CD8-positive, alpha-beta T cell (primary cell): ENCODE measurements at regions of chr1 and their contacts with region 1.

Region 1: DNA sequence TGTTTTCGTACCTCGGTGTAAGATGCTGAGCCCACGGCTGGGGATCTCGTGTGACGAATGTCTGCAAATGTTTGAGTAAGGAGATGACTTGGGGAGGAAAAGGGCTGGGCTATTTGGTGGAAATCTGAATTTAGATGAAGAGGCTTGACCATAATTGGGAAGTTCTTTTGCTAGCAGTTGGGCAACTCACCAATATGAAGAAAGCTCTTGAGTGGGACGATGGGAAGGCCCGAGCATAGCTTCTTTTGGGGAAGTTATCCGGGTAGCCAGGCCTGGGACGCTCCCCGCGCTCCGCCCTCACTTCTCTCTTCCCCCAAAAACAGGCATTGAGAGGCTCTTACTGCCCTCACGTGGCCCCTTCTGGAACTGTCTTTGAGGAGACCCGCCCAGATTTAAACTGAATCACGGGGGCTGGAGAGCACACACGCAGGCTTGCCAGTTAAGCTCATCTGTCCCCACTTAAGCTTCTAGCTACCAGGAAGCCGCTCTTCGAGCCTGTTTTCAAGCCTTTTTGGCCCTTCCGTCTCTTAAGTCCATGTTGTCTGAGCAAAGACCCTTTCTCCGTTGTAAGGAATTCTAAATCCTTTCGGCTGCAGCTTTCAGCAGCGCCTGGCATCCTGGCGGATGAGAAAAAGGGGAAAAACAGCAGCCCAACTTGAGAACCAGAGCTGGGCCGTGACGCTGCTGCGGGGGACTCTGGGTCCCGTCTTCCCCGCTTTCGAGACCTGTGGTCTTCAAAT is 93.1 kb downstream of the NID1 start:
- DNase-seq: peak; percentile 81 to 93 (median 89)
- ATAC-seq: peak; percentile 99
- H3K4me3 ChIP-seq: peak overlapping the region; percentile 20 to 46
- H3K4me3 Mint-ChIP-seq: peak overlapping the region; percentile 78
- H3K27ac ChIP-seq: peak overlapping the region; percentile 53 to 54
- H3K27ac Mint-ChIP-seq: peak overlapping the region; percentile 99
- H3K4me1 ChIP-seq: peaks cover 7% of the 10 kb centered on the region
- H3K4me1 Mint-ChIP-seq: peaks cover 16% of the 10 kb centered on the region
- H3K27me3 ChIP-seq: no peaks in the 10 kb centered on the region
- H3K27me3 Mint-ChIP-seq: no peaks in the 10 kb centered on the region
- CTCF ChIP-seq: peak; percentile 82

Region 2: GRCh38 chr1:235504496-235505222 is 467.1 kb before region 1 on chr1:
- CTCF ChIA-PET with region 1: interaction called, 5 read pairs
- POLR2A ChIA-PET with region 1: interaction called, 4 read pairs
- intact Hi-C with region 1: loop called in 1 of 2 experiments (anchors 2 kb)
- DNase-seq: peak; percentile 97 to 99 (median 98)
- ATAC-seq: peak; percentile 87
- H3K4me3 ChIP-seq: peak overlapping the region; percentile 81 to 85
- H3K4me3 Mint-ChIP-seq: peak overlapping the region; percentile 91
- H3K27ac ChIP-seq: peak overlapping the region; percentile 87 to 89
- H3K27ac Mint-ChIP-seq: peak overlapping the region; percentile 98
- H3K4me1 ChIP-seq: peaks cover 7% of the 10 kb centered on the region
- H3K4me1 Mint-ChIP-seq: peaks cover 26% of the 10 kb centered on the region
- H3K27me3 ChIP-seq: no peaks in the 10 kb centered on the region
- H3K27me3 Mint-ChIP-seq: no peaks in the 10 kb centered on the region
- CTCF ChIP-seq: peak; percentile 91

Region 3: DNA sequence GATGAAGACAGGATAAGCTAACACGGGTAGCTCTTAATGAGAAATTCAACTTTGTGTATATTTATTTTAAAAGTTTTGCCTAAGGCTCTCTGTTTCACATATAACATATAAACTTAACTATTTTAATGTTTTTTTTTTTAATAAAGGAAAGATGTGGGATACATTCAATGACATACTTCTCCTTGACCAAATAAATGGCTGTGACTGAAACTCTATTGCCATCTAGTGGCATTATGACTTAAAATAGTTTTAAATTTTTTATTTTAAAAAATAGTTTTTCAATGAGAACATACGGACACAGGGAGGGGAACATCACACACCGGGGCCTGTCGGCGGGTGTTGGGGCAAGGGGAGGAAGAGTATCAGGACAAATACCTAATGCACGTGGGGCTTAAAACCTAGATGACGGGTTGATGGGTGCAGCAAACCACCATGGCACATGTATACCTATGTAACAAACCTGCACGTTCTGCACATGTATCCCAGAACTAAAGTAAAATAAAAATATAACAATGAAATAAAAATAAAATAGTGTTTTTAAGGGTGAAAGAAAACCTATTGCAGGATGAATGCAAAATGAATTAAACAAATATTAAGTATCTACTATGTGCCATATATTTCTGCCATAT is 188.5 kb before region 1 on chr1:
- CTCF ChIA-PET with region 1: interaction called, 43 read pairs
- POLR2A ChIA-PET with region 1: interaction called, 8 read pairs
- intact Hi-C with region 1: loop called (anchors 2 to 5 kb)
- DNase-seq: peak in 2 of 9 experiments; percentile 20 to 39
- ATAC-seq: no peak
- H3K4me3 ChIP-seq: no peak overlapping the region
- H3K4me3 Mint-ChIP-seq: no peak overlapping the region
- H3K27ac ChIP-seq: no peak overlapping the region
- H3K27ac Mint-ChIP-seq: no peak overlapping the region
- H3K4me1 ChIP-seq: no peaks in the 10 kb centered on the region
- H3K4me1 Mint-ChIP-seq: no peaks in the 10 kb centered on the region
- H3K27me3 ChIP-seq: no peaks in the 10 kb centered on the region
- H3K27me3 Mint-ChIP-seq: no peaks in the 10 kb centered on the region
- CTCF ChIP-seq: peak; percentile 63

Region 4: GRCh38 chr1:235838021-235838420 is 133.7 kb before region 1 on chr1:
- CTCF ChIA-PET with region 1: interaction called, 19 read pairs
- POLR2A ChIA-PET with region 1: interaction called, 4 read pairs
- intact Hi-C with region 1: no loop called
- DNase-seq: peak in 2 of 9 experiments; percentile 37 to 61
- ATAC-seq: peak; percentile 58
- H3K4me3 ChIP-seq: no peak overlapping the region
- H3K4me3 Mint-ChIP-seq: no peak overlapping the region
- H3K27ac ChIP-seq: peak overlapping the region in 1 of 2 experiments; percentile 45
- H3K27ac Mint-ChIP-seq: no peak overlapping the region
- H3K4me1 ChIP-seq: no peaks in the 10 kb centered on the region
- H3K4me1 Mint-ChIP-seq: peaks cover 43% of the 10 kb centered on the region
- H3K27me3 ChIP-seq: no peaks in the 10 kb centered on the region
- H3K27me3 Mint-ChIP-seq: no peaks in the 10 kb centered on the region
- CTCF ChIP-seq: no peak

Region 5: DNA sequence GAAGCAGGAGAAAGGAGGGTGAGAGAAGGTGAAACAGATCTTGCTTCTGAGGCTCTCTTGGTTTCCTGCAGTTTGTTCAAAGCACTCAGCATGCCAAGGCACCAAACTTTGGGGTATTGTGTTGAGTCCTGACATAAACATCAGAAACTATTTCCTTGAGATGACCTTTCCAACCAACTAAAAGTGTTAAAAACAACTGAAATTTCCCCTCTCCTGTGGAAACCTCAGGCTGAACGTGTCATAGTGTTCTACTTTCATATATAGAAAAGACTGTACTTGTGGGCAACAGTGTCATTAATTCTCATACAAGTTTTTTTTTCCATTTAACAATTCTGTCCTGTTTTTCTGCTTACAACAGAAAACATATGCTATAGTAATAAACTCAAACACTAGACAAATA is 98.7 kb before region 1 on chr1:
- CTCF ChIA-PET with region 1: interaction called, 103 read pairs
- POLR2A ChIA-PET with region 1: interaction called, 4 read pairs
- intact Hi-C with region 1: no loop called
- DNase-seq: peak in 3 of 9 experiments; percentile 32 to 85 (median 65)
- ATAC-seq: peak; percentile 32
- H3K4me3 ChIP-seq: no peak overlapping the region
- H3K4me3 Mint-ChIP-seq: no peak overlapping the region
- H3K27ac ChIP-seq: peak overlapping the region in 1 of 2 experiments; percentile 76
- H3K27ac Mint-ChIP-seq: peak overlapping the region; percentile 85
- H3K4me1 ChIP-seq: peaks cover 25% of the 10 kb centered on the region
- H3K4me1 Mint-ChIP-seq: peaks cover 53% of the 10 kb centered on the region
- H3K27me3 ChIP-seq: no peaks in the 10 kb centered on the region
- H3K27me3 Mint-ChIP-seq: no peaks in the 10 kb centered on the region
- CTCF ChIP-seq: no peak

Region 6: DNA sequence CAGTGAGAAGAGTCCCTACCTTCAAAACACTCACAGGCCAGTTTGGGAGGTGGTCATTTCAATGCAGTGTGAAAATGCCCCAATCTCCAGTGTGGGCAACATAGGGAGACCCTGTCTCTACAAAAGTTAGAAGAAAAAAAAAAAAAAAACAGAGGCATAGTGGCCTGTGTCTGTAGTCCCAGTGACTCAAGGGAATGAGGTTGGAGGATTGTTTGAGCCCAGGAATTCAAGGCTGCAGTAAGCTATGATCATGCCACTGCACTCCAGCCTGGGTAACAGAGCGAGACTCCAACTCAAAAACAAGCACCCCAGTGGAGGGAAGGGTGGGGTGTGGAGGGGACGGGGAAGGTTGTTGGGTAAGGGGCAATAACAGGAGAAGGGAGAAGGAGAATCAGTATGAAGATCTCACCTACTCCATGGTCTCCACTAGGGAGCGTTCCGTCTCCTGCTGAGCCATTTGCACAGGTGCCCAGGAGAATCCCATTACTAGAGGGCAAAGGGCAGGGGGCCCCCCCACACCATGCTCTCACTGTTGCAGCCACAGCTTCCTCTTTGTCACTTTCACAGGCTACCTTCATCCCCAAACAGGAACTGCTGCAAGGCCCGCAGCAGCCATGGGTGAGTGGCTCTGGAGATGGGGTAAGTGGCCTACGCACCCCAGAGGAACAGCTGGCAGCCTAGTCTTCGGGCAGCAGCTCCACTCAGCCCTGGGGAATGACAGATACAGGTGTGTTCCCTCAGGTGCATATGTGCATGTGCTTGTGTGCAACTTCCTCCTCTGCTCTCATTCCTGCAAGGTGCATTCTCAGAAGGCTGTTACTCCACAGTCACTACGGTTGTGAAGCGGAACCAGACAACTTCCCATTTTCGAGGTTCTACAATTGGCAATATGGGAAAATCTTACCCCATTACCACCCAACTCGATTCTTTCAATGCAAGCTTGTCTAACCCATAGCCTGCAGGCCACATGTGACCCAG is 17.1 kb before region 1 on chr1:
- CTCF ChIA-PET with region 1: interaction called, 85 read pairs
- POLR2A ChIA-PET with region 1: interaction called, 11 read pairs
- intact Hi-C with region 1: loop called in 1 of 2 experiments (anchors 2 kb)
- DNase-seq: peak; percentile 5 to 79 (median 61)
- ATAC-seq: peak; percentile 85
- H3K4me3 ChIP-seq: no peak overlapping the region
- H3K4me3 Mint-ChIP-seq: peak overlapping the region; percentile 62
- H3K27ac ChIP-seq: peak overlapping the region in 1 of 2 experiments; percentile 14
- H3K27ac Mint-ChIP-seq: peak overlapping the region; percentile 78
- H3K4me1 ChIP-seq: peaks cover 31% of the 10 kb centered on the region
- H3K4me1 Mint-ChIP-seq: peaks cover 39% of the 10 kb centered on the region
- H3K27me3 ChIP-seq: no peaks in the 10 kb centered on the region
- H3K27me3 Mint-ChIP-seq: no peaks in the 10 kb centered on the region
- CTCF ChIP-seq: no peak